Panc1 (cell line): ENCODE measurements at regions of chr3 and their contacts with region 1.

Region 1: DNA sequence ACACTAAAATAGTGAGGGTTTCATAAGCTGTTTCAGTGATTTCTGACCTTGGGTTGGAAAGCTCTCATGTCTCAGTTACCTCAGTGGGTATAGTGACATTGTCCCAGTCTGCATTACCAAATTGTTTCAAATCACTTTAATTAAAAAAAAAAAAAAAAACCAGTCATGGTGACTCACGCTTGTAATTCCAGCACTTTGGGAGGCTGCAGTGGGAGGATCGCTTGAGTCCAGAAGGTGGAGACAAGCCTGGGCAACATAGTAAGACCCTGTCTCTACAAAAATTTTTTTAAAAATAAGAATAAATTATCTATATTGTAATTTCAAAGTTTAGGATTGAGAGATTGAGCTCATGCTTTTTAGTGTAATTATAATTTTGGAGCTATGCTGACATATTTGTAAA is 78.0 kb downstream of the MBNL1 start:
- DNase-seq: no peak
- ATAC-seq: no peak
- H3K4me3 ChIP-seq: no peak overlapping the region
- H3K27ac ChIP-seq: no peak overlapping the region
- H3K4me1 ChIP-seq: no peaks in the 10 kb centered on the region; the same call in 1 of the 2 replicates
- H3K27me3 ChIP-seq: no peaks in the 10 kb centered on the region
- CTCF ChIP-seq: no peak

Region 2: DNA sequence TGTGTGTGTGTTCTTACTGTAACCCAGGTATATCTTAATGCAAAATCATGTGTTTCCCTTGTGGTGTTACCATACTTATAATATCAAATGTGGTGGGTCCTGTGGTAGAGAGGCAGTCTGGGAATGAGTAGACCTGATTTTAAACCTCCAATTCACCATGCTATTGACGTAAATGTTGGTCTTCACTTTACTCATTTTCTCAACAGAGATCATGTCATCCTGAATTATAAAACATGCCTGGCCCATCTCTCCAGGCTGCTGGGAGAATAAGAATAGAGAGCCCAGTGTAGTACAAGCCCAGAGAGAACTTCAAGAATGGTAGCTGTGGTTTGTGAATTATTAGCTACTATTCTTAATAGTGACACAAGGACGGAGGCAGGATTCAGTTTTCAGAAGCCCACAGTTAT is 10.1 kb after region 1 on chr3:
- CTCF ChIA-PET with region 1: no interaction called
- POLR2A ChIA-PET with region 1: interaction called, 12 read pairs
- in situ Hi-C with region 1: no loop called
- intact Hi-C with region 1: no loop called
- DNase-seq: no peak
- ATAC-seq: no peak
- H3K4me3 ChIP-seq: no peak overlapping the region
- H3K27ac ChIP-seq: no peak overlapping the region
- H3K4me1 ChIP-seq: peaks cover 4% of the 10 kb centered on the region; the same call in 1 of the 2 replicates
- H3K27me3 ChIP-seq: no peaks in the 10 kb centered on the region
- CTCF ChIP-seq: no peak

Region 3: GRCh38 chr3:152519376-152519775 is 172.6 kb after region 1 on chr3:
- CTCF ChIA-PET with region 1: no interaction called
- POLR2A ChIA-PET with region 1: no interaction called
- in situ Hi-C with region 1: no loop called
- intact Hi-C with region 1: no loop called
- DNase-seq: no peak
- ATAC-seq: no peak
- H3K4me3 ChIP-seq: no peak overlapping the region
- H3K27ac ChIP-seq: no peak overlapping the region
- H3K4me1 ChIP-seq: no peaks in the 10 kb centered on the region
- H3K27me3 ChIP-seq: peaks cover 5% of the 10 kb centered on the region; the same call in 1 of the 2 replicates
- CTCF ChIP-seq: no peak